ENCODE measurements at regions of chr18 and their contacts with region 1.

Region 1: GRCh38 chr18:33231474-33232317 is 208.8 kb downstream of the CCDC178 start:
- DNase-seq: peak; percentile 11 to 69
- ATAC-seq: peak in 6 of 8 donors; percentile 51 to 76 (median 54)
- H3K4me3 ChIP-seq: no peak overlapping the region
- H3K27ac ChIP-seq: no peak overlapping the region
- H3K4me1 ChIP-seq: no peaks in the 10 kb centered on the region
- H3K27me3 ChIP-seq: no peaks in the 10 kb centered on the region
- CTCF ChIP-seq: peak; percentile 66 to 92 (median 86)

Region 2: GRCh38 chr18:33495278-33495677 is 263.6 kb after region 1 on chr18:
- intact Hi-C with region 1: loop called in 3 of 10 experiments (anchors 5 to 10 kb)
- DNase-seq: no peak
- ATAC-seq: peak in 1 of 8 donors; percentile 51
- H3K4me3 ChIP-seq: no peak overlapping the region
- H3K27ac ChIP-seq: no peak overlapping the region
- H3K4me1 ChIP-seq: no peaks in the 10 kb centered on the region
- H3K27me3 ChIP-seq: no peaks in the 10 kb centered on the region
- CTCF ChIP-seq: peak in 6 of 9 donors; percentile 21 to 44 (median 35)

Region 3: DNA sequence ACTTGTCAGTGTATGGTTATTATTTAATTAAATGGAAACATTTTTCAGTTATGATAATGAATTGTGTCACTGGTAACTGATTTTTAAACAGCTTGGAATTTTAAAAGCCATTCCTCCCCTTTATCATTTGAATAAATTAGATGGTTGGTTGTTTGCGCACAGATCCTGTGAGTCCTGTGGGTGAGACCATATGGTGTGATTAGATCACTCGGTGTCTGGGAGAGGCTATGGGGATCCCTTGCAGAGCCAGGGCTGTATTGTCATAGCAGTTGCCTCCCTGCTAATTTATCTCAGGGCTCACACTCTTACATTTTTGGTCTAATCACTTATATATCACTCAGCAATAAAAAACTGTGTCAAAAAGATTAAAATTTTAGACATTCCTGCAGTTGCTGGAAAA is 479.8 kb after region 1 on chr18:
- intact Hi-C with region 1: no loop called
- DNase-seq: no peak
- ATAC-seq: no peak
- H3K4me3 ChIP-seq: no peak overlapping the region
- H3K27ac ChIP-seq: no peak overlapping the region
- H3K4me1 ChIP-seq: peaks cover 0 to 15% (median 0%) of the 10 kb centered on the region in 9 donors
- H3K27me3 ChIP-seq: no peaks in the 10 kb centered on the region
- CTCF ChIP-seq: no peak

Region 4: GRCh38 chr18:33751613-33752221 is 520.0 kb after region 1 on chr18:
- intact Hi-C with region 1: loop called in 1 of 10 experiments (anchors 10 kb)
- DNase-seq: no peak
- ATAC-seq: no peak
- H3K4me3 ChIP-seq: no peak overlapping the region
- H3K27ac ChIP-seq: no peak overlapping the region
- H3K4me1 ChIP-seq: peaks cover 0 to 9% (median 0%) of the 10 kb centered on the region in 9 donors
- H3K27me3 ChIP-seq: no peaks in the 10 kb centered on the region
- CTCF ChIP-seq: peak in 8 of 9 donors; percentile 30 to 56 (median 46)

Region 5: GRCh38 chr18:33761363-33761762 is 529.7 kb after region 1 on chr18:
- intact Hi-C with region 1: loop called in 7 of 10 experiments (anchors 2 to 10 kb)
- DNase-seq: peak in 1 of 2 donors; percentile 8
- ATAC-seq: no peak
- H3K4me3 ChIP-seq: no peak overlapping the region
- H3K27ac ChIP-seq: no peak overlapping the region
- H3K4me1 ChIP-seq: no peaks in the 10 kb centered on the region
- H3K27me3 ChIP-seq: no peaks in the 10 kb centered on the region
- CTCF ChIP-seq: peak in 6 of 9 donors; percentile 37 to 56 (median 44)

Measured in heart right ventricle (tissue), 16 donors.